MCF 10A (cell line): ENCODE measurements at regions of chr10 and their contacts with region 1.

Region 1: DNA sequence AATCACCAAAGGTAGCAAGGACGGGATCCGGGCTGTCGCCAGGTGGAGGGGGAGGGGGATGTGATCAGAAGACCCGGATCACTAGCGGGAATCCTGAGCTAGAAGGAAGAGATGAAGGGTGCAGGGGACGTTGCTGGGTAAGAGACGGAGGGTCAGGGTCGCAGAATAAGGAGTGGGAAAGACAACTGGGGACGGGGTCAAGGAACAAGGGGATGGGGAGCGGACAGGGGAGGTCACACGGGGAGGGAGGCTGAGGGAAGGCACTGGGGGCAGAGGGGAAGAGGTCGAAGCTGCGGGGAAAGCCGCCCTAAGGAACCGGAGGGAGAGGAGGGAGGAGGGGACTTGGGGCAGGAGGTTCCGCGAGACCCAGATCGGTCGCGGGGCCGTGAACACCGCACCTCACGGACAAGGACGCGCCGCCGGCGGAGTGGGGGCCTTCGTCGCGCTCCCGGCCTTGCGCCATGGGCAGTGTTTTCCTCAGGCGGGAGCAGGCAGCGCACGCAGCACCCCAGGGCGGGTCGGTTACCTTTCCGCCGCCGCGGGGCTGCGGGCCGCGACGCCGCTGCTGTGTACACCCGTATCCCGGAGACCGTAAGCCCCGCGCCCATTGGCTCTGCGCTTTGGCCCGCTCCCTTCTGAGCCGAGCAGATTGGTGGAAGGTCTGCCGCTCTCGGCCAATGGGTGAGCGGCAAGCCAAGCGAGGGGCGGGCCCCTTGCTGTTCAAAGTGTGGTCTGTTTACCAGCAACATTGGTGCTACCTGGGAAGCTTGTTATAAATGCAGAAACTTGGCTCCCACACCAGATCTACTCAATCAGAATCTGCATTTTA is at the start of gene CFAP43:
- DNase-seq: peak; percentile 97
- H3K4me3 Mint-ChIP-seq: peak within 1 kb of the TSS; percentile 81
- H3K27ac Mint-ChIP-seq: peak within 1 kb of the TSS; percentile 93
- H3K4me1 Mint-ChIP-seq: peaks cover 11% of the 10 kb centered on the region
- H3K27me3 Mint-ChIP-seq: peaks cover 27% of the 10 kb centered on the region
- CTCF ChIP-seq: no peak
- total RNA-seq, gene CFAP43: 0.25 and 0.42 TPM in 2 replicates

Region 2: GRCh38 chr10:104268716-104269645 is 37.0 kb after region 1 on chr10 and contains the start of gene GSTO2:
- CTCF ChIA-PET with region 1: interaction called, 10 read pairs
- POLR2A ChIA-PET with region 1: interaction called, 11 read pairs
- intact Hi-C with region 1: no loop called
- DNase-seq: peak; percentile 97
- H3K4me3 Mint-ChIP-seq: peak within 1 kb of the TSS; percentile 85
- H3K27ac Mint-ChIP-seq: peak within 1 kb of the TSS; percentile 92
- H3K4me1 Mint-ChIP-seq: peaks cover 8% of the 10 kb centered on the region
- H3K27me3 Mint-ChIP-seq: no peaks in the 10 kb centered on the region
- CTCF ChIP-seq: no peak
- total RNA-seq, gene GSTO2: 33.8 and 40.9 TPM in 2 replicates